ENCODE measurements at regions of chr3 and their contacts with region 1.

Region 1: DNA sequence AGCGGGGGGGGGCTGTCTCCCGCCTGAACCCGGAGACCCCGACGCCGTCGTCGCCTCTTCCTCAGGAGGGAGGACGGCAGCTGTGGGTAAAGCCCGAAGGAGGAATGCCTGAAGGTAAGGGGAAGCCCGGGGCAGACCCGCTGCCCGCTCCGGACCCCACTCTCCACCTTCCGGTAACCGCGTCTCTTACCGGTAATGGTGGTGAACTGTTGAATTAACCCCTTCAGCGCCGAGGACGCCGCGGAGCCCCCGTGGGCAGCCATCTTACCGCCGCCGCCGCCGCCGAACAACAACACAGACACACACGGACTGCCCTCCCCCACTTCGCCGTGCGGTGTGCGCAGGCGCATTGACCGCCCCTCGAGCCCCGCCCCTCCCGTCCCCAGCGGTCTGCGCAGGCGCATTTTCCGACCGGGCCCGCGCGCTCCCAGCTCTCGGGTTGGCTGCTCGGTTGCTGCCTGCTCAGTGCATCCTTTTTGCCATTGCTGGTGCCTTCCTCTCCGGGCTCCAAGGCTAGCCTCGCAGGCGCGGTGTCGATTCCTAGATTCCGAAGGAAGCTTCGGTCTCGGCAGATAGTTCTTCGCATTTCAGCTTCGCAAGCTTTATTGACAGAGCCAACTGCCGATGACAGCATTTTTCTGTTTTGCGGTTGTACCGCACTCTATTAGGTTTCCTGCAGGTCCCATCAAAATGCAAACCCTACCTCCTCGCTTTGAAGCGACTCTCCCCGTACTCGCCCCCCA is at the start of gene UBXN7:
- DNase-seq: peak; percentile 89 to 98
- H3K4me3 ChIP-seq: peak within 1 kb of the TSS; percentile 88 to 99 (median 95)
- H3K27ac ChIP-seq: peak within 1 kb of the TSS; percentile 87
- H3K4me1 ChIP-seq: peaks cover 0 to 3% (median under 1%) of the 10 kb centered on the region in 4 experiments; a peak in 3 of 7 replicates
- H3K27me3 ChIP-seq: no peaks in the 10 kb centered on the region
- CTCF ChIP-seq: no peak
- EP300 ChIP-seq: peak in 1 of 2 experiments; percentile 84; a peak in 2 of 3 replicates
- POLR2A ChIP-seq: peak; percentile 78 to 89
- RAD21 ChIP-seq: no peak
- total RNA-seq, gene UBXN7: 109 and 122 TPM in 2 replicates

Region 2: DNA sequence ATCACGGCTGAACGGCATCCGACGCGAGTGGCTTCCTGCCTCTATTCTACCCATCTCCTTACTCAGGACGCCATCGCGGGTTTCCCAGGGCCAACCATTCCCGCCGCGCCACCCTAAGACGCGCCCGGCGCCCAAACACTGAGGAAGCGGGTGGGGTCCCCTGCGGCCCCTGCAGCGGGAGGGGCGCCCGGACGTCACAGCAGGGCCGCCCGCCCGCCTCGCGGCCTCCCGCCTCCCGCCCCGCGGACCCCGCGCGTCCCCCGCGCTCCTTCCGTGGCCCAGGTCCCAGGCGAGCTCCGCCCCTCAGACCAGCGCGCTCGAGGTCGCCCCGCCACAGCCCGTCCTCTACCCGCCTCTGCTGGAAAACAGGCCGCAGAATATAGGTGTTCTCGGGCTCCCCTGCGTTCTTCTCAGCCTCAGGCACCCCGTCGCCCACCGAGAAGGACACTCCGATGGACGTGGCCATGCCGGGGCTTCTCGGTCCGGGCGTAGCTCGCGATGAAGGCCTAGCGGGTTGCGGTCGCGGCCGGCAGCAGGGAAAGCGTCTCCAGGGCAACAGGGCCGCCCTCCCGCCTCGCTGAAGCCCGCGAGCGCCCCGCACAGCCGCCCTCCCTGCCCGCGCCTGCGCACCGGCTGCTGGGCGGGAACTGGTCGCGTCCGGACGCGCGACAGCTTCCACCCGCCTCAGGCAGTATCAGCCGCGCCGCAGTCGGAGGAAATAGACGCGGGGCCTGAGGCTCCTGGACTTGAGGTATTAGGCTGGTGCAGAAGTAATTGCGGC is 114.4 kb before region 1 on chr3 and contains the start of gene DYNLT2B:
- CTCF ChIA-PET with region 1: no interaction called
- POLR2A ChIA-PET with region 1: interaction called, 10 read pairs
- DNase-seq: peak; percentile 43 to 89
- H3K4me3 ChIP-seq: peak within 1 kb of the TSS; percentile 55 to 98 (median 91)
- H3K27ac ChIP-seq: peak within 1 kb of the TSS; percentile 75
- H3K4me1 ChIP-seq: no peaks in the 10 kb centered on the region
- H3K27me3 ChIP-seq: no peaks in the 10 kb centered on the region
- CTCF ChIP-seq: no peak
- EP300 ChIP-seq: no peak
- POLR2A ChIP-seq: peak in 1 of 2 experiments; percentile 58; a peak in 1 of 3 replicates
- RAD21 ChIP-seq: 0 out of 4 replicates have a peak, but pooled peaks of 1 of the 2 experiments have one; percentile 11
- total RNA-seq, gene DYNLT2B: 9.7 and 10.9 TPM in 2 replicates